ENCODE measurements at regions of chr5 and their contacts with region 1.

Region 1: GRCh38 chr5:141564216-141564692 is 54.5 kb downstream of the DIAPH1 start:
- DNase-seq: peak; percentile 14 to 94 (median 48)
- ATAC-seq: peak; percentile 97
- H3K4me3 ChIP-seq: no peak overlapping the region
- H3K4me3 Mint-ChIP-seq: no peak overlapping the region
- H3K27ac ChIP-seq: peak overlapping the region; percentile 37 to 66
- H3K27ac Mint-ChIP-seq: peak overlapping the region; percentile 40
- H3K4me1 ChIP-seq: peaks cover 3% of the 10 kb centered on the region
- H3K4me1 Mint-ChIP-seq: peaks cover 39% of the 10 kb centered on the region
- H3K27me3 ChIP-seq: no peaks in the 10 kb centered on the region
- H3K27me3 Mint-ChIP-seq: no peaks in the 10 kb centered on the region
- CTCF ChIP-seq: peak; percentile 98

Region 2: GRCh38 chr5:141223112-141223783 is 341.0 kb before region 1 on chr5 and contains the start of gene PCDHB14:
- CTCF ChIA-PET with region 1: no interaction called
- POLR2A ChIA-PET with region 1: no interaction called
- intact Hi-C with region 1: loop called (anchors 5 to 10 kb)
- DNase-seq: peak in 3 of 14 experiments; percentile 5 to 37 (median 31)
- ATAC-seq: no peak
- H3K4me3 ChIP-seq: no peak within 1 kb of the TSS
- H3K4me3 Mint-ChIP-seq: peak within 1 kb of the TSS; percentile 27
- H3K27ac ChIP-seq: no peak within 1 kb of the TSS
- H3K27ac Mint-ChIP-seq: no peak within 1 kb of the TSS
- H3K4me1 ChIP-seq: peaks cover 5% of the 10 kb centered on the region
- H3K4me1 Mint-ChIP-seq: no peaks in the 10 kb centered on the region
- H3K27me3 ChIP-seq: peaks cover 31 to 52% of the 10 kb centered on the region in 2 experiments
- H3K27me3 Mint-ChIP-seq: peaks cover 71% of the 10 kb centered on the region
- CTCF ChIP-seq: no peak
- total RNA-seq, gene PCDHB14: not detected

Region 3: GRCh38 chr5:141326088-141326854 is 238.0 kb before region 1 on chr5:
- CTCF ChIA-PET with region 1: interaction called, 40 read pairs
- POLR2A ChIA-PET with region 1: interaction called, 5 read pairs
- intact Hi-C with region 1: loop called (anchors 1 to 2 kb)
- DNase-seq: peak; percentile 51 to 83 (median 62)
- ATAC-seq: peak; percentile 93
- H3K4me3 ChIP-seq: peak overlapping the region; percentile 61
- H3K4me3 Mint-ChIP-seq: peak overlapping the region; percentile 92
- H3K27ac ChIP-seq: peak overlapping the region in 1 of 2 donors; percentile 24
- H3K27ac Mint-ChIP-seq: peak overlapping the region; percentile 74
- H3K4me1 ChIP-seq: peaks cover 8% of the 10 kb centered on the region
- H3K4me1 Mint-ChIP-seq: peaks cover 11% of the 10 kb centered on the region
- H3K27me3 ChIP-seq: peaks cover 18 to 27% of the 10 kb centered on the region in 2 experiments
- H3K27me3 Mint-ChIP-seq: peaks cover 53% of the 10 kb centered on the region
- CTCF ChIP-seq: peak; percentile 58

Region 4: GRCh38 chr5:141492168-141492885 is 71.9 kb before region 1 on chr5:
- CTCF ChIA-PET with region 1: no interaction called
- POLR2A ChIA-PET with region 1: no interaction called
- intact Hi-C with region 1: no loop called
- DNase-seq: peak in 3 of 14 experiments; percentile 8 to 50 (median 48)
- ATAC-seq: peak; percentile 34
- H3K4me3 ChIP-seq: peak overlapping the region; percentile 30
- H3K4me3 Mint-ChIP-seq: peak overlapping the region; percentile 68
- H3K27ac ChIP-seq: no peak overlapping the region
- H3K27ac Mint-ChIP-seq: no peak overlapping the region
- H3K4me1 ChIP-seq: peaks cover 27% of the 10 kb centered on the region
- H3K4me1 Mint-ChIP-seq: peaks cover 11% of the 10 kb centered on the region
- H3K27me3 ChIP-seq: peaks cover 74 to 93% of the 10 kb centered on the region in 2 experiments
- H3K27me3 Mint-ChIP-seq: peaks cover 91% of the 10 kb centered on the region
- CTCF ChIP-seq: no peak

Region 5: GRCh38 chr5:141590127-141590526 is 25.9 kb after region 1 on chr5:
- CTCF ChIA-PET with region 1: interaction called, 24 read pairs
- POLR2A ChIA-PET with region 1: interaction called, 6 read pairs
- intact Hi-C with region 1: loop called in 1 of 2 experiments (anchors 2 kb)
- DNase-seq: peak in 1 of 14 experiments; percentile 24
- ATAC-seq: no peak
- H3K4me3 ChIP-seq: no peak overlapping the region
- H3K4me3 Mint-ChIP-seq: no peak overlapping the region
- H3K27ac ChIP-seq: no peak overlapping the region
- H3K27ac Mint-ChIP-seq: no peak overlapping the region
- H3K4me1 ChIP-seq: peaks cover 21% of the 10 kb centered on the region
- H3K4me1 Mint-ChIP-seq: peaks cover 73% of the 10 kb centered on the region
- H3K27me3 ChIP-seq: no peaks in the 10 kb centered on the region
- H3K27me3 Mint-ChIP-seq: no peaks in the 10 kb centered on the region
- CTCF ChIP-seq: no peak

Region 6: GRCh38 chr5:141757402-141757801 is 193.1 kb after region 1 on chr5:
- CTCF ChIA-PET with region 1: no interaction called
- POLR2A ChIA-PET with region 1: no interaction called
- intact Hi-C with region 1: no loop called
- DNase-seq: no peak
- ATAC-seq: no peak
- H3K4me3 ChIP-seq: no peak overlapping the region
- H3K4me3 Mint-ChIP-seq: no peak overlapping the region
- H3K27ac ChIP-seq: no peak overlapping the region
- H3K27ac Mint-ChIP-seq: no peak overlapping the region
- H3K4me1 ChIP-seq: no peaks in the 10 kb centered on the region
- H3K4me1 Mint-ChIP-seq: peaks cover 6% of the 10 kb centered on the region
- H3K27me3 ChIP-seq: peaks cover 57 to 70% of the 10 kb centered on the region in 2 experiments
- H3K27me3 Mint-ChIP-seq: peaks cover 94% of the 10 kb centered on the region
- CTCF ChIP-seq: no peak

Measured in CD4-positive, alpha-beta T cell (primary cell).